Heart right ventricle (tissue), 16 donors: ENCODE measurements at regions of chr1 and their contacts with region 1.

Region 1: GRCh38 chr1:81264976-81265375 is 535.8 kb upstream of the ADGRL2 start:
- DNase-seq: no peak
- ATAC-seq: no peak
- H3K4me3 ChIP-seq: no peak overlapping the region
- H3K27ac ChIP-seq: no peak overlapping the region
- H3K4me1 ChIP-seq: no peaks in the 10 kb centered on the region
- H3K27me3 ChIP-seq: no peaks in the 10 kb centered on the region
- CTCF ChIP-seq: no peak

Region 2: GRCh38 chr1:80218112-80218511 is 1046.9 kb before region 1 on chr1:
- intact Hi-C with region 1: loop called in 1 of 10 experiments (anchors 5 kb)
- DNase-seq: no peak
- ATAC-seq: peak in 1 of 8 donors; percentile 37
- H3K4me3 ChIP-seq: no peak overlapping the region
- H3K27ac ChIP-seq: no peak overlapping the region
- H3K4me1 ChIP-seq: peaks cover 0 to 3% (median 0%) of the 10 kb centered on the region in 9 donors
- H3K27me3 ChIP-seq: no peaks in the 10 kb centered on the region
- CTCF ChIP-seq: peak in 7 of 9 donors; percentile 28 to 51 (median 37)

Region 3: DNA sequence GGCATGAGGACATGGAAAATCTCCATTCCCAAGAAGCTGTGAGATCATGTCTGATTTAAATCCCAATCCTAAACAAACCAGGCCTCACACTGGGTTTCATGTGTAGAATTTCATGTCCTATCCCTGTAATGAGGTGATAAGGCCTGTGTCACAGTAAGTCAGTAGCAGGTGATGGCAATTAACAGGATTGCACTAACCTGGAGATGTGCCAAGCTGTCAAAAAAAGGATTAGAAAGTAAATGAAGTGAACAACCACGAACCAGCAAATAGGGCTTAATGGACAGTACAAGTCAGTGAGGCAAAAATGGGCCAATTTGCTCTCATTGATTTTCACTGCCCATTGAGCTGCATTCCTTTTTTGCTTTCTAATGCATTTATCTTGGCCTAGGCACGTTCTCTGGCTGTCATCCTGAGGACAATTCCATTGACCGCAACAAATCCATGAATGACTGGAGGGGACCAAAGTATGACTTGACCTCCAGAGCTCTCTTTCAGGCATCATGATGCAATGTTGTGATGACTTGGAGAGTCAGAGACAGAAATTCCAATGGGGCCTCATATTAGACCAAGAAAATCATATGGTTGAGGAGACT is 137.9 kb before region 1 on chr1:
- intact Hi-C with region 1: no loop called
- DNase-seq: no peak
- ATAC-seq: no peak
- H3K4me3 ChIP-seq: no peak overlapping the region
- H3K27ac ChIP-seq: no peak overlapping the region
- H3K4me1 ChIP-seq: peaks cover 0 to 5% (median 0%) of the 10 kb centered on the region in 9 donors
- H3K27me3 ChIP-seq: no peaks in the 10 kb centered on the region
- CTCF ChIP-seq: no peak

Region 4: GRCh38 chr1:81165963-81166362 is 99.0 kb before region 1 on chr1:
- intact Hi-C with region 1: no loop called
- DNase-seq: no peak
- ATAC-seq: no peak
- H3K4me3 ChIP-seq: no peak overlapping the region
- H3K27ac ChIP-seq: no peak overlapping the region
- H3K4me1 ChIP-seq: no peaks in the 10 kb centered on the region
- H3K27me3 ChIP-seq: no peaks in the 10 kb centered on the region
- CTCF ChIP-seq: no peak

Region 5: GRCh38 chr1:81358156-81358555 is 93.2 kb after region 1 on chr1:
- intact Hi-C with region 1: loop called in 1 of 10 experiments (anchors 5 kb)
- DNase-seq: no peak
- ATAC-seq: no peak
- H3K4me3 ChIP-seq: no peak overlapping the region
- H3K27ac ChIP-seq: no peak overlapping the region
- H3K4me1 ChIP-seq: no peaks in the 10 kb centered on the region
- H3K27me3 ChIP-seq: no peaks in the 10 kb centered on the region
- CTCF ChIP-seq: no peak